ENCODE measurements at regions of chr7 and their contacts with region 1.

Region 1: DNA sequence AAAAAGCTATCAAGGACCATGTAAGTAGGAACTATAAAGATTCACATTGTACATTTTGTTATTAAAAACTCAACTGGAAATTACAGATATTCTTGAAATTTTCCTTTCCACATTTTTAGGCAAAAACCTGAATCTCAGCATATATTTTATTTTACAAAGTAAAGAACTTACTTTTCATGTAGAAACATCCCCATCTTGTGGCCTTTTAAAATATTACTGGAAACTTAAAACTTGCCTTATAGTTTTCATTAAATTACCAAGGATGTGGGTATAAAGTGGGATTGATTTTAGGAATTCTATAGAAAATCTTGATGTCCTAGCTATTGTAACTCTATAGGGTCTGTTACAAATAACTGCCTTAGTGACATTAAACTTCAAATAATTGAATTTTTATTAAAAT is 10.6 kb downstream of the DBF4 start:
- DNase-seq: no peak
- ATAC-seq: no peak

Region 2: DNA sequence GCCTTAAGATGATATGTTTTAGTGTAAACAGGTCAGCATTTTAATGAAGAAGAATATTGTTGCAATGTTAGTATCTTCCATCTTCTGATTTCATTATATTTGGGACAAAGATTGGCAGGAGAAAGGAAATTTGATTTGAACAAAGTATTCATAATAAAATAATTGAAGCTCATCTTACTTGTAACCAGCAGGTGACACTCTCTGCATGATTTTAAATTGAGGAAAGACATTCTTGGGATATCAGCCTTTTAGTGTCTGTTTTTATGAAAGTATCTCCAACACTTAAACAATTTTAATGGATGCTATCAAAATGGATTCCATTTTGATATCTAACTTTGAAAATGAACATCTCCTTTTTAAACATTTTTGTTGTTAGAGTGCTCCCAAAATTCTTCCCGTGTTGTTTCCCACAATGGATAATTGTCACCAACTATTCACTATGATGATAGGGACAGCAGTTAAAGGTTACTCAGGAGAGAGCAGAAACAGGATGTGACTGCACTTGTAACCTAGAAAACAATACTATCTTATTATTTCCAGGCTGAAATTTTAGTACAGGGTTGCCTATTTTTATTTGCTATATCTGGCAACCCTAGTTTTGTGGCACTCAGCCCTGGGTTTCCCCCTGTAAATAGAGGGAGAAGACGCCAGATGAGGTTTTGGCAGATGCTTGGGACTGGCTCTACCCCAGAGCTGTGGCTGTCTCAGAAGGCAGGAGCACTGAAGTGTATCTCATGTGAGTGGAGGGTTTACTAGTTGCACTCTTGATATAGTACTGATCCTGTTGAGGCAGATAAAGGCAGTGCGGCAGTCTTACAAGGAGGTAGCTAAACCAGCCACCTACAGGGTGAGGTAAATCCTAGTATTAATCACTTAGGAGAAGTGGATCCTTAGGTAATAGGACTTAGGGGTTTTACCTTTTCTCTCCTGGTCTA is 380.4 kb before region 1 on chr7:
- intact Hi-C with region 1: loop called (anchors 2 kb)
- DNase-seq: no peak
- ATAC-seq: no peak